SK-N-SH (cell line): ENCODE measurements at regions of chr1 and their contacts with region 1.

Region 1: GRCh38 chr1:62175568-62176179 is 19.0 kb upstream of the L1TD1 start:
- DNase-seq: peak; percentile 51
- H3K4me3 ChIP-seq: peak overlapping the region in 1 of 2 experiments; percentile 7; a peak in 1 of 4 replicates
- H3K27ac ChIP-seq: no peak overlapping the region
- H3K4me1 ChIP-seq: no peaks in the 10 kb centered on the region; a peak in 1 of 4 replicates
- H3K27me3 ChIP-seq: no peaks in the 10 kb centered on the region
- CTCF ChIP-seq: peak; percentile 88
- EP300 ChIP-seq: no peak
- RAD21 ChIP-seq: peak; percentile 95

Region 2: DNA sequence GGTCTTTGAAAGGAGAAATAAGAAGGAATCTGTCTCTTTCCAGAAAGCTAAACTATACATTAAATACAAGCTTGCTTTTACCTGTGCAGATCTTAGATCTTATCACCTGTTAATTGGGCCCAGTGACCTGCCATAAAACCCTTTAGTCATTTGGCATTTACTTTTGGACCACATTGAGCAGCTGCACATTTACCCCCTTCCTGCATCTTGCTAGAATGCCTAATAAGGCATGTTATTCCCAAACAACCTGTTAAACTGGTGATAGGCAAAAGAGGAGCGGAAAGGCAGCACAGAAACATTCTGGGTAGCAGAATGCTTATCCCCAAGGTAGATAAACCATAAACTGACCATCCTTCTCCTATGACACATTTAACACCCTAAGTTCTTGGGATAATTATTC is 21.0 kb before region 1 on chr1:
- CTCF ChIA-PET with region 1: interaction called, 12 read pairs
- POLR2A ChIA-PET with region 1: no interaction called
- DNase-seq: no peak
- H3K4me3 ChIP-seq: no peak overlapping the region
- H3K27ac ChIP-seq: no peak overlapping the region
- H3K4me1 ChIP-seq: no peaks in the 10 kb centered on the region
- H3K27me3 ChIP-seq: no peaks in the 10 kb centered on the region
- CTCF ChIP-seq: no peak
- EP300 ChIP-seq: no peak
- RAD21 ChIP-seq: no peak

Region 3: GRCh38 chr1:62198781-62199125 is 23.1 kb after region 1 on chr1:
- CTCF ChIA-PET with region 1: interaction called, 10 read pairs
- POLR2A ChIA-PET with region 1: no interaction called
- DNase-seq: no peak
- H3K4me3 ChIP-seq: no peak overlapping the region
- H3K27ac ChIP-seq: no peak overlapping the region
- H3K4me1 ChIP-seq: no peaks in the 10 kb centered on the region
- H3K27me3 ChIP-seq: no peaks in the 10 kb centered on the region
- CTCF ChIP-seq: no peak
- EP300 ChIP-seq: no peak
- RAD21 ChIP-seq: no peak

Region 4: GRCh38 chr1:62218604-62219003 is 42.9 kb after region 1 on chr1:
- CTCF ChIA-PET with region 1: no interaction called
- POLR2A ChIA-PET with region 1: no interaction called
- DNase-seq: no peak
- H3K4me3 ChIP-seq: no peak overlapping the region
- H3K27ac ChIP-seq: no peak overlapping the region
- H3K4me1 ChIP-seq: no peaks in the 10 kb centered on the region
- H3K27me3 ChIP-seq: no peaks in the 10 kb centered on the region
- CTCF ChIP-seq: no peak
- EP300 ChIP-seq: no peak
- RAD21 ChIP-seq: no peak

Region 5: GRCh38 chr1:62286786-62287224 is 111.1 kb after region 1 on chr1:
- CTCF ChIA-PET with region 1: interaction called, 12 read pairs
- POLR2A ChIA-PET with region 1: no interaction called
- DNase-seq: no peak
- H3K4me3 ChIP-seq: no peak overlapping the region
- H3K27ac ChIP-seq: no peak overlapping the region
- H3K4me1 ChIP-seq: peaks cover 0 to 9% of the 10 kb centered on the region in 2 experiments; a peak in 2 of 4 replicates
- H3K27me3 ChIP-seq: peaks cover 9% of the 10 kb centered on the region; the same call in 1 of the 2 replicates
- CTCF ChIP-seq: no peak
- EP300 ChIP-seq: no peak
- RAD21 ChIP-seq: no peak

Region 6: GRCh38 chr1:62407405-62408009 is 231.8 kb after region 1 on chr1:
- CTCF ChIA-PET with region 1: interaction called, 186 read pairs
- POLR2A ChIA-PET with region 1: interaction called, 4 read pairs
- DNase-seq: peak; percentile 65
- H3K4me3 ChIP-seq: no peak overlapping the region; a peak in 1 of 4 replicates
- H3K27ac ChIP-seq: no peak overlapping the region
- H3K4me1 ChIP-seq: no peaks in the 10 kb centered on the region
- H3K27me3 ChIP-seq: no peaks in the 10 kb centered on the region; the same call in 1 of the 2 replicates
- CTCF ChIP-seq: peak; percentile 89
- EP300 ChIP-seq: no peak
- RAD21 ChIP-seq: peak; percentile 95

Region 7: GRCh38 chr1:62436466-62437256 is 261.0 kb after region 1 on chr1 and contains the start of gene USP1:
- CTCF ChIA-PET with region 1: interaction called, 11 read pairs
- POLR2A ChIA-PET with region 1: interaction called, 4 read pairs
- DNase-seq: peak; percentile 95
- H3K4me3 ChIP-seq: peak within 1 kb of the TSS; percentile 94 to 96
- H3K27ac ChIP-seq: peak within 1 kb of the TSS; percentile 97 to 100
- H3K4me1 ChIP-seq: peaks cover 3 to 13% of the 10 kb centered on the region in 2 experiments; a peak in 3 of 4 replicates
- H3K27me3 ChIP-seq: no peaks in the 10 kb centered on the region
- CTCF ChIP-seq: no peak
- EP300 ChIP-seq: no peak; a peak in 1 of 4 replicates
- RAD21 ChIP-seq: no peak
- polyA plus RNA-seq, gene USP1: 3.9 and 4.3 TPM in 2 replicates

Region 8: GRCh38 chr1:62774971-62775595 is 599.4 kb after region 1 on chr1:
- CTCF ChIA-PET with region 1: no interaction called
- POLR2A ChIA-PET with region 1: no interaction called
- DNase-seq: no peak
- H3K4me3 ChIP-seq: no peak overlapping the region
- H3K27ac ChIP-seq: no peak overlapping the region
- H3K4me1 ChIP-seq: no peaks in the 10 kb centered on the region
- H3K27me3 ChIP-seq: no peaks in the 10 kb centered on the region
- CTCF ChIP-seq: no peak
- EP300 ChIP-seq: no peak
- RAD21 ChIP-seq: no peak